BJ (cell line): ENCODE measurements at regions of chr1 and their contacts with region 1.

Region 1: GRCh38 chr1:33460947-33461629 is 11.4 kb upstream of the ZSCAN20 start:
- DNase-seq: no peak
- H3K4me3 ChIP-seq: no peak overlapping the region
- H3K27me3 ChIP-seq: no peaks in the 10 kb centered on the region
- CTCF ChIP-seq: no peak

Region 2: GRCh38 chr1:33472349-33472980 is 11.4 kb after region 1 on chr1 and contains the start of gene ZSCAN20:
- CTCF ChIA-PET with region 1: interaction called, 44 read pairs
- POLR2A ChIA-PET with region 1: no interaction called
- DNase-seq: peak; percentile 94
- H3K4me3 ChIP-seq: peak within 1 kb of the TSS; percentile 66
- H3K27me3 ChIP-seq: no peaks in the 10 kb centered on the region
- CTCF ChIP-seq: no peak
- polyA plus RNA-seq, gene ZSCAN20: 2.9 and 3.4 TPM in 2 replicates